ENCODE measurements at regions of chr10 and their contacts with region 1.

Region 1: DNA sequence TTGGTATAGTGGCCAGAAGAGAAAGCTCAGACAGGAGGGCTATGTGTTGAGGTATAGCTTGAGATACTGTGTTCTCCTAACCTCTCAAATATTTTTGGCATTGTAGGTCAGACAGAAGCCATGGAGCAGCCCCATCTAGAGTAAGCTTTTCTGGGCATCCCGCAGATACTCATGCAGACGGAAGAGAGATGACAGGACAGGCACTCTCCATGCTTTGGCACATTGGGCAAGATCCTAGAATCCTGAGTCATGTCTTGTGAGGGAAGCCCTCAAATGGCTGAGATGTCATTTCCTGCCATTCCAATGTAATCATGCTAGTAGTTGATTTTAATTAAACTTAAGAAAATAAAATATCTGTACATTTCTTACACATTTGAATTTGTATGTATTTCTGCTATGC is 16.8 kb upstream of the KIF20B start:
- DNase-seq: no peak
- H3K4me3 ChIP-seq: no peak overlapping the region
- H3K27ac ChIP-seq: no peak overlapping the region
- H3K4me1 ChIP-seq: no peaks in the 10 kb centered on the region
- H3K27me3 ChIP-seq: no peaks in the 10 kb centered on the region
- CTCF ChIP-seq: no peak
- POLR2A ChIP-seq: no peak

Region 2: GRCh38 chr10:87952612-87953011 is 1732.0 kb before region 1 on chr10:
- intact Hi-C with region 1: loop called (anchors 5 kb)
- DNase-seq: no peak
- H3K4me3 ChIP-seq: no peak overlapping the region
- H3K27ac ChIP-seq: no peak overlapping the region
- H3K4me1 ChIP-seq: peaks cover 0 to 10% of the 10 kb centered on the region in 2 donors
- H3K27me3 ChIP-seq: no peaks in the 10 kb centered on the region
- CTCF ChIP-seq: no peak
- POLR2A ChIP-seq: no peak

Region 3: DNA sequence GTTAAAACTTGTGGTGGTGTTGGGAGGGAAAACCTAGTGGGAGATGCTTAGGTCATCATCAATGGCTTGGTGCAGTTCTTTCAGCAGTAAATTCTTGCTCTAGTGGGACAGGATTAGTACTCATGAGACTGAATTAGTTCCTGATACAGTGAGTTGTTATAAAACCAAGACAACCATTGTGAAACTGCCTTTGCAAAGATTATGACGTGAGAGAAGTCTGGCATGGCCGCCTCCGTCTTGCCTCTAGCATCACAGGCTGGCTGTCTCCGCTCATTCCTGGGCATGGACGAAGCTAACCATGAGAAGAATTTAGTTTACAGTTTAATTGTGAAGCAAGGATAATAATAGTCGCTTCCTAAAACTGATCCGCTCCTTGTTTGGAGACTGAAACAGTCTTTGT is 203.2 kb after region 1 on chr10:
- intact Hi-C with region 1: no loop called
- DNase-seq: no peak
- H3K4me3 ChIP-seq: no peak overlapping the region
- H3K27ac ChIP-seq: no peak overlapping the region
- H3K4me1 ChIP-seq: no peaks in the 10 kb centered on the region
- H3K27me3 ChIP-seq: no peaks in the 10 kb centered on the region
- CTCF ChIP-seq: no peak
- POLR2A ChIP-seq: no peak